ENCODE measurements at regions of chr12 and their contacts with region 1.

Region 1: DNA sequence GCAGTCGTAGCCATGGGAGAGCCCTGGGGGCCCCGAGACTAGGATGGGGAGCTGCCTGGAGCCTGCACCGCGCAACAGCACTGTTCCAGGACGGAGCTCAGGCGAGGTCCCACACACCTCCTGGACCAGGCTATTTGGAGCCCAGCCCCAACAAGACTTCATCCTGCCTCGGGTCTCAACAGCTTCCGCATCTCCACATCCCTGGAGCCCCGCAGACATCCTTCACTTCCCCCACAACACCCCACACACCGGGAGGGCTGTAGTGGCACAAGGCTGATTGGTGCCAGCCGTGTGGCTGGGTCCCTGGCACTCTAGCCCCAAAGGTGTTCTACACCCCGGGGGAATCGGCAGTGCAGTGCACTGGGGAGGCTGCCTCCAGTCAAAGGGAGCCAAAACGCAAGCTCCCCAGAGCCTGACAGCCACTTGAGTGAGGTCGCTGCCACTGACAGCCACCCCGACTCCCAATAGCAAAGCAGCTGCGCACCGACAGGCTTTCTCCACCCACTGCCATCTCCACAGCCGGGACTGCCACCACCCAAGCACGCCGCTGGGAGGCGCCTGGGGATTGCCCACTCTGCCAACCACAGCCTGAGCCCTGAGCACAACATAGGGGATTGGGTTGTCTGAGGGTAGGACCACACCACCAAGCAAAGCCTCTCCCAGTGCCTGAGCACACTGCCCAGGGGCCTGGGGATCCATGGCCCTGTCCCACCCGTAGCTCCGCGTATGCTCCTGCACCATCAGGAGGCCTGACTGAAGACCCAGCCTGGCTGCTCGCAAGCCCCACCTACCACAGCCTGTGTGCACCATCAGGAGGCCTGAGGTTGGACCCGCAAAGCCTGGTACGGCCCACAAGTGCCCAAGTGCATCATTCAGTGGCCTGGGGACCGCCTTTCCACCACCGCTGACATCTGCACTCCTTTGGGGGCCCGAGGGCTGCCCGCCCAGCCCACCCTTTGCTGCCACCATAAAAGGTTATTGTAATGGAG is 13.2 kb upstream of the KLRF1 start:
- DNase-seq: peak; percentile 91
- H3K4me3 Mint-ChIP-seq: peak overlapping the region; percentile 72
- H3K27ac Mint-ChIP-seq: no peak overlapping the region
- H3K4me1 Mint-ChIP-seq: peaks cover 12% of the 10 kb centered on the region
- H3K27me3 Mint-ChIP-seq: peaks cover 19% of the 10 kb centered on the region

Region 2: GRCh38 chr12:9827209-9827888 is 13.2 kb after region 1 on chr12 and contains the start of gene KLRF1:
- CTCF ChIA-PET with region 1: interaction called, 23 read pairs
- POLR2A ChIA-PET with region 1: no interaction called
- intact Hi-C with region 1: no loop called
- DNase-seq: no peak
- H3K4me3 Mint-ChIP-seq: no peak within 1 kb of the TSS
- H3K27ac Mint-ChIP-seq: no peak within 1 kb of the TSS
- H3K4me1 Mint-ChIP-seq: no peaks in the 10 kb centered on the region
- H3K27me3 Mint-ChIP-seq: peaks cover 5% of the 10 kb centered on the region
- total RNA-seq, gene KLRF1: not detected

Region 3: DNA sequence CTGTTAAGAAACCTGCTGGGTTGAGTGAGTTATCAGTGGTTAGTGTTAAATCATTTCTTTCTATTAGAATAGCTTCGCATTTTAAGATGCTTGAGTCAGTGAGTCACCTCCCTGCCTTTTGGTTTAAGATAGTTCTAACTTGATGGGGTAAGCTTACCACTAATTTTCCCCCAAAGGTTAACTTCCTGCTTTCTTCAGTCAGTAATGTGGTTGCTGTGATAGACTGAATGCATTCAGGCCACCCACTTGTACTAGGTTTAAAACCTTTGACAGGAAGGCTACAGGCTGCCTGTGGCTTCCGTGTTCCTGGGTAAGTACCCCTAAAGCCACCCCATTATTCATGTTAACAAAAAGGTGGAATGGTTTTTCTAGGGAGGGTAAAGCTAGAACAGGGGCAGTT is 92.8 kb after region 1 on chr12:
- CTCF ChIA-PET with region 1: interaction called, 15 read pairs
- POLR2A ChIA-PET with region 1: interaction called, 4 read pairs
- intact Hi-C with region 1: no loop called
- DNase-seq: peak; percentile 24
- H3K4me3 Mint-ChIP-seq: no peak overlapping the region
- H3K27ac Mint-ChIP-seq: peak overlapping the region; percentile 39
- H3K4me1 Mint-ChIP-seq: peaks cover 19% of the 10 kb centered on the region
- H3K27me3 Mint-ChIP-seq: no peaks in the 10 kb centered on the region

Region 4: GRCh38 chr12:10001171-10001776 is 187.2 kb after region 1 on chr12:
- CTCF ChIA-PET with region 1: interaction called, 4 read pairs
- POLR2A ChIA-PET with region 1: no interaction called
- intact Hi-C with region 1: loop called (anchors 10 kb)
- DNase-seq: no peak
- H3K4me3 Mint-ChIP-seq: no peak overlapping the region
- H3K27ac Mint-ChIP-seq: no peak overlapping the region
- H3K4me1 Mint-ChIP-seq: no peaks in the 10 kb centered on the region
- H3K27me3 Mint-ChIP-seq: peaks cover 6% of the 10 kb centered on the region

Region 5: DNA sequence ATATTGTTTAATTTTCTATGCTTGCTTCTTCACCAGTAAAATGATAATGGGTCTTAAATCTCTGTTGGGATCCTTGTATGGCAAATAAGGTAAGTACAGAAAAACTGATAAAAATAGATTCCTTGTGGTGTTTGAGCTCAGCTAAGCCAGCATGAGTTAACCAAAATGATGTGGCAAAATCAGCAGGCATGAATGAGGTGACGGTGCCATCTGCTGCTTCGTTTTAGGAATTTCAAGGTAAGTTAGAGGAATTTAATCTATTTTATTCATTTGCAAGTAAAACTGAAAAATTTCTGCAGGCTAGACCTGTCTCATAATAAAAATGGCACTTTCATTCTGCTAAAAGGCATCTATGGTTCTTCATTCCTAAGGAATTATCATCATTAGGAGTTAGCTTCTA is 325.9 kb after region 1 on chr12:
- CTCF ChIA-PET with region 1: interaction called, 23 read pairs
- POLR2A ChIA-PET with region 1: no interaction called
- intact Hi-C with region 1: loop called (anchors 1 kb)
- DNase-seq: peak; percentile 66
- H3K4me3 Mint-ChIP-seq: no peak overlapping the region
- H3K27ac Mint-ChIP-seq: no peak overlapping the region
- H3K4me1 Mint-ChIP-seq: no peaks in the 10 kb centered on the region
- H3K27me3 Mint-ChIP-seq: peaks cover 8% of the 10 kb centered on the region

Measured in activated CD4-positive, alpha-beta memory T cell treated with anti-CD3 and anti-CD28 coated beads for 36 hours (primary cell).